ENCODE measurements at regions of chr1 and their contacts with region 1.

Region 1: DNA sequence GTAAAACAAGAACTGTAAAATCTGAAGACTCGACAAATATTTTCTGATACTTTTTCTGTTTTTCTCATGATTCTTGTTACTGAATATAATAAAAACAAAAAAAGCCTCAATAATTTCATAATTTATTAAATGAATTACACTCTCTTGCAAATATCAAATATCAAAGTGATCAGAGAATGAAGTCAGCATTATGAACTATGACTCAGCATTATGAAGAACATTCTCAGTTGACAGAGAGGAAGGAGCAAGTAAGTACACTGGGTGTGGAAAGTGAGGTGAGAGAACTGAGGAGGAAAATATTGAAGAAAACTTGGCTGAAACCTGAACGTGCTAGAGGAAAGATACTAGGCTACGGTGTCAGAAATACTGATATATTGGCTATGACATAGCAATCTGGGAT is 529.5 kb downstream of the KCNT2 start:
- DNase-seq: no peak
- ATAC-seq: no peak
- H3K4me3 ChIP-seq: no peak overlapping the region
- H3K27ac ChIP-seq: no peak overlapping the region
- H3K4me1 ChIP-seq: no peaks in the 10 kb centered on the region
- H3K27me3 ChIP-seq: no peaks in the 10 kb centered on the region
- CTCF ChIP-seq: no peak
- EP300 ChIP-seq: no peak
- POLR2A ChIP-seq: no peak
- RAD21 ChIP-seq: no peak

Region 2: DNA sequence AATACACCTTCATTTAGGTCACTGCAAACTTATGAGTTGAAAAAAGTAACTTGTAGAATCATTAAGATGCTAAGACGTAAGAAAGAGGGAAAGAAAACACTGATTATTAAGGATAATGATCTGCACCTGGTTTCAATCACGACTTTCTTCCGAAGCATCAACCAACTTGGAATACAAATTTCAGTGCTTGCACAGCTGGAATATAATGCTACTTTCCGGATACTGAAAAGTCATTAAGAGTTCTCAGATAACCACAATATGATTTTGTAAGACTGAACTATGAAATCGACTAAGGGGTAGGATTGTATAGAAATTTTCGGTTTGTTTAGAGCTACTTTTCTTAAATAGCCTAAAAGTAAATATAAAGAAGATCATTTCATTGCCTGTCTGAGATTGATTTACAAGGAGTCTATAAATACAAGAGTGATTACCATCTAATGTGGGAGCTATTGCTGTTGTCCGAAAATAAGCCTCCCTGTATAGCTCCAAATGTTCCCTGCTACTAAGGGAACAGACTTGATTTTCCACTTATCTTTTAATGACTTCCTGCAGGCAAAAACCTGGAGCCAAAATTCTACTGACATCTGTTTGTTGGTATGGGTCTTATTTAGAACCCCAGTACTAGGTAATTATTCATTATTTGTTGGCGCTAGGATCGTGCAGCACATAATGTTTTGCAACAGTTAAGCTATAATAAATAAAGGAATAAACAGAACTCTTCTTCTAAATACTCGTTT is 143.7 kb before region 1 on chr1:
- CTCF ChIA-PET with region 1: no interaction called
- POLR2A ChIA-PET with region 1: no interaction called
- RAD21 ChIA-PET with region 1: no interaction called
- SMC1A ChIA-PET with region 1: no interaction called
- in situ Hi-C with region 1: no loop called
- intact Hi-C with region 1: no loop called
- DNase-seq: no peak
- ATAC-seq: no peak
- H3K4me3 ChIP-seq: no peak overlapping the region
- H3K27ac ChIP-seq: no peak overlapping the region
- H3K4me1 ChIP-seq: no peaks in the 10 kb centered on the region
- H3K27me3 ChIP-seq: no peaks in the 10 kb centered on the region
- CTCF ChIP-seq: no peak
- EP300 ChIP-seq: no peak
- POLR2A ChIP-seq: no peak
- RAD21 ChIP-seq: no peak

Region 3: DNA sequence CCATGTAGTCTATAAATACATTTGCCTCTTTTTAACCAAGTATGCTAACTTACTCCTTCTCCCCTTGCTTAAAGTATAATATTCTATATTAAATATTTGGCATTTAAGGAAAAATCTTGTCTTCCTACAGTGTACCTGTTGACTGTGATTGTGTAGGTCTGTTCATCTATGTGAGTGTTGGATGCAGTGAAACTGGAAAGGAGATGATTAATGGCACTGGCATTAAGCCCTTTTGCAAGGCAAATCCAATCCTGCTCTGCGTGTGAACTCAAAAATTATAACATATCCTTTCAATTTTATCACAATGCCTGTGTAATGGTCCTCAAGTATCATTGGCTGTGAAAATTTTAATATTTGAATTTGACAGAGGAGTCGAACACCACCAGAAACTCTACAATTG is 35.4 kb before region 1 on chr1:
- CTCF ChIA-PET with region 1: no interaction called
- POLR2A ChIA-PET with region 1: no interaction called
- RAD21 ChIA-PET with region 1: no interaction called
- SMC1A ChIA-PET with region 1: no interaction called
- in situ Hi-C with region 1: no loop called
- intact Hi-C with region 1: no loop called
- DNase-seq: no peak
- ATAC-seq: no peak
- H3K4me3 ChIP-seq: no peak overlapping the region
- H3K27ac ChIP-seq: no peak overlapping the region
- H3K4me1 ChIP-seq: no peaks in the 10 kb centered on the region
- H3K27me3 ChIP-seq: no peaks in the 10 kb centered on the region
- CTCF ChIP-seq: no peak
- EP300 ChIP-seq: no peak
- POLR2A ChIP-seq: no peak
- RAD21 ChIP-seq: no peak

Region 4: DNA sequence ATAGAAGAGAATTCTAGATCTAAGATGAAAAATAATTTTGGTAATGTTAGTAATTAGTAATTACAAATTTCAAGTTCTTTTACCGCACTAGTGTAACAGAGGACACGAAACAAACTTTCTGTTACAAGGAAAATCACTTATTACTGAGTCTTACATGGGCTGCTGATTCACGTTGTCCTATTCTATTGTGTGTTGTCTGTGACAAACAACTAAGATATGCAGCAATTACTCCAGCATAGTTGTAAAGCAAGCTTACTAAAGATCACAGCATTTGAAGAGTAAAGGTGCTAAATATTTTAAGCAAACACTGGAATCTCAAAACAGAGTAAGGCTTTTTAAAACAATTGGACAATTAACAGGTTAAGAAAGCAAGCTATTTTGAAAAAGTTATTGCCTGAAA is 27.2 kb after region 1 on chr1:
- CTCF ChIA-PET with region 1: no interaction called
- POLR2A ChIA-PET with region 1: no interaction called
- RAD21 ChIA-PET with region 1: no interaction called
- SMC1A ChIA-PET with region 1: no interaction called
- in situ Hi-C with region 1: no loop called
- intact Hi-C with region 1: no loop called
- DNase-seq: no peak
- ATAC-seq: no peak
- H3K4me3 ChIP-seq: no peak overlapping the region
- H3K27ac ChIP-seq: no peak overlapping the region
- H3K4me1 ChIP-seq: no peaks in the 10 kb centered on the region
- H3K27me3 ChIP-seq: no peaks in the 10 kb centered on the region
- CTCF ChIP-seq: no peak
- EP300 ChIP-seq: no peak
- POLR2A ChIP-seq: no peak
- RAD21 ChIP-seq: no peak

Region 5: DNA sequence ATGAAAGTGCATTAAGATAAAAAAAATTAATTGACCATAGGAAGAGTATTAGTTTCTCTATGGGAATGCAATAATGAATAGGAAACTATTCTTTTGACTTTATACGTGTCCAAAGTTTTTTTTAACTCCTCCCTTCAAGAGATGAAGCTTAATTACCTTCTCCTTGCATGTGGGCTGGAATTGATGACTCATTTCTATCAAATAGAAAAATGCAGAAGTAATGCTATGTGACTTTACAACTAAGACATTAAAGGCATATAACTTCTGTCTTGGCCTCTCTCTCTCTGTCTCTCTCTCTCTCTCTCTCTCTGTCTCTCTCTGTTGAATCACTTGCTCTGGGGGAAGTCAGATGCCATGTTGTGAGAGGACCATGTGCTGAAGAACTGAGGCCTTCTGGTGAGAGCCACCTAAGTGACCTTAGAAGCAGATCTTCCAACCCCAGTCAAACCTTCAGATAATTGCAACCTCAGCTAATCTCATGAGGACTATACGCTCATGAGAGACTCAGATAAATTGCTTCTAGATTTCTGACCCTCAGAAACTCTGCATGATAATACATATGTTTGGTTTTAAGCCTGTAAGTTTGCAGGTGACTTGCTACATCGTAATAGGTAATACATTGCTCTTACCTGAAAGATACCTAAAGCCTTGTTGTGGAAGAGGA is 115.3 kb after region 1 on chr1:
- CTCF ChIA-PET with region 1: no interaction called
- POLR2A ChIA-PET with region 1: no interaction called
- RAD21 ChIA-PET with region 1: no interaction called
- SMC1A ChIA-PET with region 1: no interaction called
- in situ Hi-C with region 1: no loop called
- intact Hi-C with region 1: no loop called
- DNase-seq: no peak
- ATAC-seq: no peak
- H3K4me3 ChIP-seq: no peak overlapping the region
- H3K27ac ChIP-seq: no peak overlapping the region
- H3K4me1 ChIP-seq: no peaks in the 10 kb centered on the region
- H3K27me3 ChIP-seq: no peaks in the 10 kb centered on the region
- CTCF ChIP-seq: no peak
- EP300 ChIP-seq: no peak
- POLR2A ChIP-seq: no peak
- RAD21 ChIP-seq: no peak

Region 6: DNA sequence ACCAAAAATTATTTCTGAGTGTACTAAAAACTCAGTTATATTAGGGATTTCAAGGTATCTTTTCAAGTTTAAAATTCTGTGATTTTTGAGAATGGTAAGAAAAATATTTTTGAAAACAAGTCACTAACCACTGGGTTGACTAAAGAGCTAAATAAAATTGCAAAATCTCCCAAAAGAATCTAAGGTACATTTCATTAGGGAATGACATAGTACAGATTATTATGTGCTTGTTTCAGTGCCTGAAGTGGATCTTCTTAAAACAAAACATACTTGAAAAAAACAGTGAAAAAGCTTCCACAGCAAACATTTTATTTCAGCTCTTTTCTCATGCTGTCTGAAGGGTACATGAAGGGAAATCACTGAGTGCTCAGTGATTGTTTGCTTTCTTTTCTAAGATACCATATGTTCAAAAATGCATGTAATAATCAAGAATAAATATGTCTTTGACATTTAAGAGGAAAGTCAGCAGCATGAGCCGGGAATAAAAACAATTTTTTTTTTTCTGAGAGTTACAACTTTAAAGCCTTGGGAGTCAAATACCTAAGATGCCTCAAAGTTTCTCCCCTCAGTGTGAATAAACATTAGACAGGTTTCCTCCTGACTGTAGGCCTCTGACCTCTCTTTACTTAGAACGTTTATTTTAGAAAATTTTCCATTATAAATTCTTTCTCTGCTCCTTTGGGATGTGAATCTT is 328.8 kb after region 1 on chr1:
- CTCF ChIA-PET with region 1: no interaction called
- POLR2A ChIA-PET with region 1: no interaction called
- RAD21 ChIA-PET with region 1: no interaction called
- SMC1A ChIA-PET with region 1: no interaction called
- in situ Hi-C with region 1: no loop called
- intact Hi-C with region 1: loop called (anchors 5 kb)
- DNase-seq: no peak
- ATAC-seq: no peak
- H3K4me3 ChIP-seq: no peak overlapping the region
- H3K27ac ChIP-seq: no peak overlapping the region
- H3K4me1 ChIP-seq: no peaks in the 10 kb centered on the region
- H3K27me3 ChIP-seq: no peaks in the 10 kb centered on the region
- CTCF ChIP-seq: no peak
- EP300 ChIP-seq: no peak
- POLR2A ChIP-seq: no peak
- RAD21 ChIP-seq: no peak